CD4-positive, alpha-beta T cell (primary cell): ENCODE measurements at regions of chr22 and their contacts with region 1.

Region 1: GRCh38 chr22:17222503-17222902 is 3.3 kb upstream of the ADA2 start:
- DNase-seq: no peak
- ATAC-seq: no peak
- H3K4me3 ChIP-seq: no peak overlapping the region
- H3K4me3 Mint-ChIP-seq: no peak overlapping the region
- H3K27ac ChIP-seq: no peak overlapping the region
- H3K27ac Mint-ChIP-seq: peak overlapping the region; percentile 86
- H3K4me1 ChIP-seq: peaks cover 35% of the 10 kb centered on the region
- H3K4me1 Mint-ChIP-seq: peaks cover 45% of the 10 kb centered on the region
- H3K27me3 ChIP-seq: no peaks in the 10 kb centered on the region
- H3K27me3 Mint-ChIP-seq: no peaks in the 10 kb centered on the region
- CTCF ChIP-seq: no peak

Region 2: DNA sequence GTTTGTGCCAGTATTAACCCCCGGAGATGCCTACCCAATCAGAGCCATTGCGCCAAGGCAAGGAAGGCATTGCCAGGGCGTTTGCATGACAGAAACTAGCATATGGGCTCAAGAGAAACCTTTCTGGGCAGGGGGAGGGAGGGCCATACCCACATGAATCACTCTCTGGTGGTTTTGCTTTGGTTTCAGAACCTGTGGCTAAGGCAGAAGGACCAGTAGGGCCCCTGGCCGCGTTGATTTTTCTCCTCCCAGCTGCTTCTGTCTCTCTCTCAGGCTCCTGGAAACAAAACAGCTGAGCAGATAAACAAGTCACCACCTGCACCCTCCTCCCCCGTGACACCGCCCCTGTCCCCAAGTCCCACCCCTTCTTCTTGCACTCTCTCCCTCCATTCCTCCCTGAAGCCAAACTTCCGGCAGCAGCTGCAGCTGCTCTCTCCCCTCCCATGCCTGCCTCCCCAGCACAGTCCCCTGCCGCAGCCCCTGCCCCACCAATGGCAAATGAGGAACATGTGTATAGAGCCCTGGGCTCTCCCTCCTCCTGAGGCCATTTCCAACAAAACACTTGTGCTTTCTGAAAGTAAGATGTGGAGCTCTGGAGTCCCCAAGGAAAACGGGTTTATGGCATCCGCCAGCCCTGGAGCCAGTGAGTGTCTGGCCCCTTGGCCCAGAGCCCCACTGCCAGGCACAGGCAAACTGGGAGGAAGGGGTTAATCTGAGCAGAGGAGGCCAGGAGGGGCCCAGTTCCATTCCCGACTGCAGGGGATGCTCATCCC is 35.7 kb after region 1 on chr22:
- CTCF ChIA-PET with region 1: no interaction called
- POLR2A ChIA-PET with region 1: interaction called, 15 read pairs
- intact Hi-C with region 1: loop called (anchors 5 kb)
- DNase-seq: peak; percentile 16 to 74 (median 50)
- ATAC-seq: peak; percentile 92
- H3K4me3 ChIP-seq: peak overlapping the region; percentile 35
- H3K4me3 Mint-ChIP-seq: peak overlapping the region; percentile 65
- H3K27ac ChIP-seq: peak overlapping the region in 1 of 2 donors; percentile 18
- H3K27ac Mint-ChIP-seq: peak overlapping the region; percentile 81
- H3K4me1 ChIP-seq: peaks cover 23% of the 10 kb centered on the region
- H3K4me1 Mint-ChIP-seq: peaks cover 21% of the 10 kb centered on the region
- H3K27me3 ChIP-seq: no peaks in the 10 kb centered on the region
- H3K27me3 Mint-ChIP-seq: no peaks in the 10 kb centered on the region
- CTCF ChIP-seq: no peak

Region 3: DNA sequence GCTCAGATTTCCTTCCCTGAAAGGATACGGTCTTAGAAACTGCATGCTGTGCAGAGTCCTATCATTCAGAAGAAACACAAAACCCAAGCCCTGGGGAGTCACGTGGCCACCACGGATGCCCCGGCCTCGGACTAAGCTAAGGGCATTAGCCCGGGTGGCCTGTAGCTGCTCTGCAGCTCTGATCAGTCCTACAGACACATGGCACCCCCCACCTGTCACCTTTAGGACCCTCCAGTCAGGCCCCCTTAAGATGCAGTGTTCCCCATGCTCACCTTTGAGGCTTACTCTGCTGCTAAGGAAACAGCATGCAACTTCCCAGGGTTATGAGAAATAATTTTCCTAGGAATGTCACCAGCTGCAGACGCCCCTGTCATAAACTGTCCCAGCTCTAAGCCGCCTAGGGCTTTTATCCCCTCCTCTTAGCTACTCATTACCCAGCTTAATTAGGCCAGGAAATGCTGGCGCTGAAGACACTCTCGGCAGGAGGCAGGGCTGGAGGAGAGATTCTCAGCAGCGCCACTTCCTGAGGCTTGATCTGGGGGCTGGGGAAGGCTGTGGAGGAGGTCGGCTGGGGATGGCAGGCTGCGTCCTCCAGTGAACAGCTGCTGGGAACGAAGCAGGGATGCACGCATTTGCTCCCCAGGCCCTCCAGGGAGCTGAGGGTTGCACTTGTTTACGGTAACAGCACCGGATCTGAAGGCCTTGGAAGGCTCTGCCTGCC is 43.9 kb after region 1 on chr22:
- CTCF ChIA-PET with region 1: no interaction called
- POLR2A ChIA-PET with region 1: interaction called, 4 read pairs
- intact Hi-C with region 1: loop called in 1 of 2 experiments (anchors 5 kb)
- DNase-seq: peak in 11 of 14 experiments; percentile 9 to 60 (median 32)
- ATAC-seq: peak; percentile 66
- H3K4me3 ChIP-seq: no peak overlapping the region
- H3K4me3 Mint-ChIP-seq: no peak overlapping the region
- H3K27ac ChIP-seq: no peak overlapping the region
- H3K27ac Mint-ChIP-seq: peak overlapping the region; percentile 35
- H3K4me1 ChIP-seq: peaks cover 19% of the 10 kb centered on the region
- H3K4me1 Mint-ChIP-seq: peaks cover 14% of the 10 kb centered on the region
- H3K27me3 ChIP-seq: no peaks in the 10 kb centered on the region
- H3K27me3 Mint-ChIP-seq: no peaks in the 10 kb centered on the region
- CTCF ChIP-seq: no peak

Region 4: DNA sequence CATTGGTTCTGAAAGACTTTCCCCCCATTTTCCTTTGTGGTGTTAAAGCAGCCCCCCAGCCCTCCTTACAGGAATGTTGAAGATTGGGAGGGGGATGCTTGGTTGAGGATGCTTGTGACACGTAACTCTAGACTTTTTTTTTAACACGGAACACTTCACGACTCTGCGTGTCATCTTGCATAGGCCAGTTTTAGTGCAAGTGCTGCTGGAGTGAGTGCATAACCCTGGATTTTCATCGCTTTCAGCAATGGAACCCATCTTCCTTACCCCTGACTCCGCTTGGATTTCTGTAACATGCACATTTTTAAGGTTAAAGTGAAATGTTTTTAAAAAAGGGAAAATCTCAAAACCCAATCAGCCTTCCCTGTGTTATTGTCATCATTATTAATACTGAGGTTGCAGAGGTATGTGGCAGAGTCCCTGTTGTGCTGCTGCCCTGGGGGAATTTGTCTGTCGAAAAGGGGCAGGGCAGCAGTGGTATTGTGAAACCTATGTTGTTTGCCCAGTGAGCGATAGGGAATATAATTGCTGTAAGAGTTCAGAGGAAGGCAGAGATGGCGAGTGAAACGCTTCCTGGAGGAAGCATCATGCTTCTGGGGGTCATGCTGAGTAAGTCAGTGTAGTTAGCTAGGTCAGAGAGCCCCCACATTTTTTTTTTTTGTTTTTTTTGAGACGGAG is 158.9 kb after region 1 on chr22:
- CTCF ChIA-PET with region 1: no interaction called
- POLR2A ChIA-PET with region 1: no interaction called
- intact Hi-C with region 1: no loop called
- DNase-seq: no peak
- ATAC-seq: no peak
- H3K4me3 ChIP-seq: no peak overlapping the region
- H3K4me3 Mint-ChIP-seq: no peak overlapping the region
- H3K27ac ChIP-seq: no peak overlapping the region
- H3K27ac Mint-ChIP-seq: no peak overlapping the region
- H3K4me1 ChIP-seq: no peaks in the 10 kb centered on the region
- H3K4me1 Mint-ChIP-seq: no peaks in the 10 kb centered on the region
- H3K27me3 ChIP-seq: peaks cover 0 to 6% of the 10 kb centered on the region in 2 experiments
- H3K27me3 Mint-ChIP-seq: peaks cover 34% of the 10 kb centered on the region
- CTCF ChIP-seq: no peak